GM12878 (cell line): ENCODE measurements at regions of chr17 and their contacts with region 1.

Region 1: GRCh38 chr17:44522883-44523671 is 19.9 kb upstream of the GPATCH8 start:
- DNase-seq: peak; percentile 46
- ATAC-seq: peak; percentile 99
- H3K4me3 ChIP-seq: no peak overlapping the region
- H3K27ac ChIP-seq: no peak overlapping the region
- H3K4me1 ChIP-seq: no peaks in the 10 kb centered on the region; the same call in 1 of the 2 replicates
- H3K27me3 ChIP-seq: no peaks in the 10 kb centered on the region
- CTCF ChIP-seq: peak; percentile 71 to 81 (median 77)
- EP300 ChIP-seq: no peak
- POLR2A ChIP-seq: no peak
- RAD21 ChIP-seq: peak; percentile 80

Region 2: DNA sequence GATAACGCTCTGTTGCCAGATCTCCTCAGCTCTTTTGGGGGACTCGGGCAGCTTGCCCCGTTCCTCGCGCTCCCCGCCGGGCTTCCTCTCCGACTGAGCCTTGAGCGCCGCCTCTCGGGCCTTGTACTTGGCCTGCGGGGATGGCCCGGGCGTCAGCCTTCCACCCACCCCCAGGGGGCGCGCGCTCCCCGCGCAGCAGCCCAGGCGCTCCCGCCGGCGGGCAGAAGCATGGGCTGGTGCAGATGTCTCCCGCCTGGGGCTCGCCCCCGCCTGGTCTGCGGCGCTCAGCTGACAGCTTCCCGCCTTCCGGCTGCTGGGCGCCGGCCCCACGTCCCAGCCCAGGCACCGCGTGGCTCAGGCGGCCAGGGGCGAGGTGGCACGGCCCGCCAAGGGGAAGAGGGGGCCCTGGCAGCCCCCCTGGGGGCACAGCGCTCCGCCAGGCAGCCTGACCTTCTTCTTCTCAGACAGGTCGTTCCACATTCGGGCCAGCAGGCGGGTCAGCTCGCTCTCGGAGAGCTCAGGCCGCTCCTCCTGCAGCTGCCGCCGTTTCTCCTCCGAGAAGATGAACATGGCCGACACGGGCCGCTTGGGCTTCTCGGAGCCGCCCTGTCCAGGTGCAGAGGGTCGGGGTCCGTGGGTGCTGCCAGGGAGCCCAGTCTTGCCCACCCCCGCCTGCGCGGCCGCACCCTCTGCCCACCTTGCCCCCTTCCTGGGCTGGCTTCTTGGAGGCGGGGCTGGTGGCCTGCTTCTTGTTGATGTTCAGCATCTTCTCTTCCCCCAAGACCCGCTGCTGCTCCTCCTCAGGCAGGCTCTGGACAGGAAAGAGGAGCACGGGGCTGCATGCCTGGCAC is 312.5 kb before region 1 on chr17:
- CTCF ChIA-PET with region 1: interaction called, 13 read pairs
- POLR2A ChIA-PET with region 1: no interaction called
- RAD21 ChIA-PET with region 1: interaction called, 18 read pairs
- SMC1A ChIA-PET with region 1: no interaction called
- in situ Hi-C with region 1: loop called (anchors 25 kb)
- intact Hi-C with region 1: no loop called
- DNase-seq: no peak
- ATAC-seq: peak; percentile 98
- H3K4me3 ChIP-seq: peak overlapping the region; percentile 54; the same call in 1 of the 2 replicates
- H3K27ac ChIP-seq: peak overlapping the region; percentile 82
- H3K4me1 ChIP-seq: peaks cover 22% of the 10 kb centered on the region
- H3K27me3 ChIP-seq: no peaks in the 10 kb centered on the region
- CTCF ChIP-seq: peak; percentile 98 to 100 (median 99); a peak in 5 of 6 replicates
- EP300 ChIP-seq: no peak
- POLR2A ChIP-seq: peak; percentile 79
- RAD21 ChIP-seq: peak; percentile 91

Region 3: GRCh38 chr17:44350733-44351226 is 172.3 kb before region 1 on chr17:
- CTCF ChIA-PET with region 1: interaction called, 12 read pairs
- POLR2A ChIA-PET with region 1: no interaction called
- RAD21 ChIA-PET with region 1: interaction called, 4 read pairs
- SMC1A ChIA-PET with region 1: interaction called, 6 read pairs
- in situ Hi-C with region 1: no loop called
- intact Hi-C with region 1: no loop called
- DNase-seq: peak; percentile 27
- ATAC-seq: peak; percentile 53
- H3K4me3 ChIP-seq: no peak overlapping the region
- H3K27ac ChIP-seq: no peak overlapping the region
- H3K4me1 ChIP-seq: peaks cover 40% of the 10 kb centered on the region
- H3K27me3 ChIP-seq: no peaks in the 10 kb centered on the region; a peak in 1 of 4 replicates
- CTCF ChIP-seq: peak; percentile 87 to 97 (median 88)
- EP300 ChIP-seq: no peak
- POLR2A ChIP-seq: no peak; the same call in 1 of the 2 replicates
- RAD21 ChIP-seq: peak; percentile 72

Region 4: GRCh38 chr17:44400226-44400847 is 122.7 kb before region 1 on chr17:
- CTCF ChIA-PET with region 1: interaction called, 97 read pairs
- POLR2A ChIA-PET with region 1: no interaction called
- RAD21 ChIA-PET with region 1: interaction called, 31 read pairs
- SMC1A ChIA-PET with region 1: interaction called, 16 read pairs
- in situ Hi-C with region 1: no loop called
- intact Hi-C with region 1: loop called (anchors 1 kb)
- DNase-seq: no peak
- ATAC-seq: peak; percentile 60
- H3K4me3 ChIP-seq: no peak overlapping the region
- H3K27ac ChIP-seq: no peak overlapping the region; the same call in 1 of the 2 replicates
- H3K4me1 ChIP-seq: peaks cover 11% of the 10 kb centered on the region
- H3K27me3 ChIP-seq: no peaks in the 10 kb centered on the region
- CTCF ChIP-seq: peak; percentile 51 to 55 (median 54); a peak in 5 of 6 replicates
- EP300 ChIP-seq: no peak
- POLR2A ChIP-seq: no peak
- RAD21 ChIP-seq: peak; percentile 67

Region 5: DNA sequence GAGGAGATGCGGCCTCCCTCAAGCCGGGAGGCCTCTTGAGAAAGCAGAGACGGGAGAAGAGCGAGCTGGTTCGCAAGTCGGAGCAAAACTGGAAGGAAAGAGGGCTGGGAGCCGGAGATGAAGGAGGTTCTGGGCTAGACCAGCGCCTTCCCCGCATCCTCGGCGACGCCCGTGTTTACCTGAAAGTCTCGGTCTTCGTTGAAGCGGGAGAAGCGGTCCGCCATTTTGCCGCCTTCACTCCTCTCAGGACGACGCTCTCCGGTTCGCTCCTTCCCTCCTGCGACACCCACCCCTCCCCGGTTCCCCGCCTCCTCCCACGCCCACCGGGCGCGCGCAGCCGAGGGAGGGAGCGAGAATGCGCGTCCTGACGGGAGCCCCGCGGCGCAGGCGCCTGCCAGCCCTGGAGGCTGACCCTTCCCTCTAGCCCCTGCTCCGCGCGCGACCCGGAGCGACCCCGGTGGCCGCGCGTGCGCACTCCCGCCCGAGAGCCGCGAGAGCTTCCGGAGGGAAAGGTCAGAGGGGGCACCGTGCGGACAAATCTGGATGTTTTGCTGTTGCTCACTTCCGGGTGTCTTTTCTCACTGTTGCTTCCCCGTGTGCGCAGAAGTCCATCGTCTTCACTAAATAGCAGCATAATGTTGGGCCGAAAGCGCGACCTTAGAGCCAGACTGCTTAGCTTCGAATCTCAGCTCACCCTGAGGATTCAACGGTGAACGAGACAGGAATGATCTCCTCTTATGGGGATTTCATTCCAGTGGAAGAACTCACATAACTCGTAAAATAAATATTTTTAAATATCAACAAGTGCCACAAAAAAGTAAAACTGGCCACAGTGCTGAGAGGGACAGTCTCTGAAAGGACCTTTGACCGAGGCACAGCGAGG is 19.7 kb before region 1 on chr17 and contains the start of gene GPATCH8:
- CTCF ChIA-PET with region 1: interaction called, 11 read pairs
- POLR2A ChIA-PET with region 1: no interaction called
- RAD21 ChIA-PET with region 1: interaction called, 3 read pairs
- SMC1A ChIA-PET with region 1: interaction called, 5 read pairs
- in situ Hi-C with region 1: no loop called
- intact Hi-C with region 1: no loop called
- DNase-seq: peak; percentile 91
- ATAC-seq: peak; percentile 96
- H3K4me3 ChIP-seq: peak within 1 kb of the TSS; percentile 99
- H3K27ac ChIP-seq: peak within 1 kb of the TSS; percentile 91
- H3K4me1 ChIP-seq: peaks cover 5% of the 10 kb centered on the region
- H3K27me3 ChIP-seq: no peaks in the 10 kb centered on the region
- CTCF ChIP-seq: no peak
- EP300 ChIP-seq: no peak
- POLR2A ChIP-seq: peak; percentile 86
- RAD21 ChIP-seq: no peak
- polyA plus RNA-seq, gene GPATCH8: 11.7 to 18.2 TPM

Region 6: DNA sequence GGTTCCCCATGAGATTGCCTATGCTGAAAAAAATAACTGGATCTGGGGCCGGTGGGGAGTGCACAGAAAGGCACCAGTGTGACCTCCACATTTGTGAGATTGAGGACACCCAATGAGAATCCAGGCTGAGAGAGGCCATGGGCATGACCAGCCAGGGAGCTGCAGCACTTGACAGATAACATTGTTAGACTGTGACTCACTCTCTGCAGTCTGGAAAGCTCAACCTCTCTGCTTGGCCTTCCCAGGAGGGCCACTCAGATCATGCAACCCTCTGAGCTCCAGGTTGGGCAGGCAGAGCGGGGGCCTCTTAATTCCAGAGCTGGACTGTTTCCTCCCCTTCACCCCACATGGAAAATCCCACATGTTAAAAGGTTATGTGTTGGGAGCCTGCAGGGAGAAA is 64.3 kb after region 1 on chr17:
- CTCF ChIA-PET with region 1: no interaction called
- POLR2A ChIA-PET with region 1: no interaction called
- RAD21 ChIA-PET with region 1: no interaction called
- SMC1A ChIA-PET with region 1: no interaction called
- in situ Hi-C with region 1: no loop called
- intact Hi-C with region 1: no loop called
- DNase-seq: no peak
- ATAC-seq: no peak
- H3K4me3 ChIP-seq: no peak overlapping the region
- H3K27ac ChIP-seq: no peak overlapping the region
- H3K4me1 ChIP-seq: no peaks in the 10 kb centered on the region
- H3K27me3 ChIP-seq: no peaks in the 10 kb centered on the region; a peak in 1 of 4 replicates
- CTCF ChIP-seq: no peak
- EP300 ChIP-seq: no peak
- POLR2A ChIP-seq: no peak
- RAD21 ChIP-seq: no peak

Region 7: DNA sequence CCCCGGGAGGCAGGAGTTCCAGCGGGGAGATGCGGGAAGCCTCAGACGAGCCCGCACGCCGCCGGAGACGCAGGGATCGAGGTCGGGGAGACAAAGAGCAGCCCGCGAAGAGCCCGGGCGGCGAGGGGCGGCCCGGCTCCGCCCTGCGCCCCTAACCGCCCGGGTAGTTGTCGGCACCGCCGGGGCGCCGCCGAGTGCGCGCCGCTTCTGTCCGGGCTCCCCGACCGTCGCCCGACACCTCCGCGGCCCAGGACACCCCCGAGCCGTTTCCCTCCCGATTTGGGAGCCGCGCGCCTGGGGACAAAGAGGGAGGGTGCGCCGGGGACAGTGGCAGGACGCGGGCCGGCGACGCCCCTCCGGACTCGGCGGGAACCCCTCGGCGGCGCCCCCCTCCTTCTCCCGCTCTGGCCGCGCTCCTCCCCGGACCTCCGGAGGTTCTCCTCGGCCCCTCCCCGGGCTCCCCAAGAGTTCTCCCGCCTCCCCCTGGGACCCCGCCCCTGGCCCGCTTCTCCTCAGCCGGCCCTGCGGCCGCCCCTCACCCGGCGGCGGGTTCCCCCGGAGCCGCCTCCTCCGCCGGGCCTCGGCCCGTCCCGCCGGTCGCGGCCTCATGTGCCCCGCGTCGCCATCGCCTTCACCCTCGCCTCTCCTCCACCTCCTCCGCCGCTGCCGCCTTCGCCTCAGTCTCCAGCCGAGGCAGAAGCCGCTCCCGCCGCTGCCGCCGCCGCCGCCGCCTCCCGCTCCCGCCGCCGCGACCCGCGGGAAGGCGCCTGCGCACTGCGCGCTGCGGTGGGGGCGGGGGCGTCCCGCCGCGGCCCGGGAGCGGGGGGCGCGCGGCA is 306.7 kb after region 1 on chr17 and contains the start of gene GJC1:
- CTCF ChIA-PET with region 1: no interaction called
- POLR2A ChIA-PET with region 1: no interaction called
- RAD21 ChIA-PET with region 1: no interaction called
- SMC1A ChIA-PET with region 1: no interaction called
- in situ Hi-C with region 1: no loop called
- intact Hi-C with region 1: no loop called
- DNase-seq: no peak
- ATAC-seq: peak; percentile 71
- H3K4me3 ChIP-seq: peak within 1 kb of the TSS; percentile 44; the same call in 1 of the 2 replicates
- H3K27ac ChIP-seq: no peak within 1 kb of the TSS
- H3K4me1 ChIP-seq: no peaks in the 10 kb centered on the region
- H3K27me3 ChIP-seq: peaks cover 0 to 7% of the 10 kb centered on the region in 2 experiments; a peak in 3 of 4 replicates
- CTCF ChIP-seq: no peak
- EP300 ChIP-seq: no peak
- POLR2A ChIP-seq: no peak
- RAD21 ChIP-seq: no peak
- polyA plus RNA-seq, gene GJC1: 0.37 to 0.69 TPM